A549 (cell line): ENCODE measurements at regions of chr19 and their contacts with region 1.

Region 1: GRCh38 chr19:55146078-55146704 is 2.8 kb downstream of the TNNT1 start:
- DNase-seq: peak; percentile 85 to 91
- ATAC-seq: peak; percentile 73 to 83
- H3K4me3 ChIP-seq: peak overlapping the region; percentile 64
- H3K27ac ChIP-seq: peak overlapping the region; percentile 82 to 92
- H3K4me1 ChIP-seq: peaks cover 37% of the 10 kb centered on the region
- CTCF ChIP-seq: peak; percentile 94
- EP300 ChIP-seq: no peak
- POLR2A ChIP-seq: no peak
- RAD21 ChIP-seq: peak; percentile 56 to 59

Region 2: DNA sequence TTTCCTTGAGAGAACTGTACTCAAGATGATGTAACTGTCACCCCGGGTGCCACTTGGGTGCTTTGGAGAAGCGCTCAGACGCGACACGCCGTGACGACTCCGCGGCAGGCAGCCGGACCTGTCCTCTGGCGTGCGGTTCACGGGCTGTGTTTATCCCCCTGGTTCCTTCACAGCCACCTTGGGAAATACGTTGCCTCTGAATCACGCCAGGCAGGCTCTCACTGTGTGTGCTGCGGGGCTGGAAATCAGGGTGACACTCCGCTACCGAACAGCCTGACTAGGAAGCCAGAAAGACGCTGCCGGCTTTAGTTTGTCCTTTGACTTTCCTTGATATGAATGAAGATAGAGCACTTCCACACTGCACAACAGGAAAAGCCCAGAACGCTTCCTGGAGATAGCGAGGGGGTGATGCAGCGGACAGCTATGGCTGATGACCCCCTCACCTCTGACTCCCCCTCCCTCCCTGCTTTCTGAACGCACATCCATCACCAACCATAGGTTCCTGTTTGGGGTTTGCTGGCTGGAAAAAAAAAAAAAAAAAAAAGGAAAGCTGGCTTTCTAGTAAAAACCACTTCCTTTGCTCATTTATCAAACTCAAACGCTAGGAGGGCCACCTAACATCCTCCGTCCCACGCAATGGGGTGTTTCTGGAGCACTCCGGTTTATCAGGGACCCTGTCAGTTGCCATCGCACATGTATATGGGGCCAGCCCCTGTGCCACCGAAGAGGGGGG is 104.4 kb before region 1 on chr19:
- CTCF ChIA-PET with region 1: no interaction called
- POLR2A ChIA-PET with region 1: no interaction called
- DNase-seq: no peak
- ATAC-seq: no peak
- H3K4me3 ChIP-seq: no peak overlapping the region
- H3K27ac ChIP-seq: no peak overlapping the region
- H3K4me1 ChIP-seq: no peaks in the 10 kb centered on the region
- CTCF ChIP-seq: no peak
- EP300 ChIP-seq: no peak
- POLR2A ChIP-seq: no peak
- RAD21 ChIP-seq: no peak

Region 3: DNA sequence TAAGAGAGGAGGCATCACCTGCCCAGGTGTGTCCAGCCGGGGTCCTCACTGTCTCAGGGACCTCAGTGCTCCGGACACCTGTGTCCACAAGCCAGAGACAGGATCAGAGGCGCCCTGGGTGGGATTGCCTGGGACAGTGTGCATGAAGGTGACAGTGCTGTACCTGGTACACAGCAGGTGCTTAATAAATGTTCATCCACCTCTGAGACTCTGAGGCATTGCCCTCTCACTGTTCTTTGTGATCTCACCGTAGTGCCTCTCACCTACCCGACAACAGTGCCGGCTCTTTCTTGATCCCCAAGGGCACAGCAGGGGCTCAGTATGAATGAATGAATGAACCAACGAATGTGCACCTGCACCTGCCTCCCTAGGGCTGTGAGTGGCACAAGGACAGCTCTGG is 92.5 kb before region 1 on chr19:
- CTCF ChIA-PET with region 1: no interaction called
- POLR2A ChIA-PET with region 1: no interaction called
- DNase-seq: no peak
- ATAC-seq: no peak
- H3K4me3 ChIP-seq: no peak overlapping the region
- H3K27ac ChIP-seq: no peak overlapping the region
- H3K4me1 ChIP-seq: no peaks in the 10 kb centered on the region
- CTCF ChIP-seq: no peak
- EP300 ChIP-seq: no peak
- POLR2A ChIP-seq: no peak
- RAD21 ChIP-seq: no peak

Region 4: DNA sequence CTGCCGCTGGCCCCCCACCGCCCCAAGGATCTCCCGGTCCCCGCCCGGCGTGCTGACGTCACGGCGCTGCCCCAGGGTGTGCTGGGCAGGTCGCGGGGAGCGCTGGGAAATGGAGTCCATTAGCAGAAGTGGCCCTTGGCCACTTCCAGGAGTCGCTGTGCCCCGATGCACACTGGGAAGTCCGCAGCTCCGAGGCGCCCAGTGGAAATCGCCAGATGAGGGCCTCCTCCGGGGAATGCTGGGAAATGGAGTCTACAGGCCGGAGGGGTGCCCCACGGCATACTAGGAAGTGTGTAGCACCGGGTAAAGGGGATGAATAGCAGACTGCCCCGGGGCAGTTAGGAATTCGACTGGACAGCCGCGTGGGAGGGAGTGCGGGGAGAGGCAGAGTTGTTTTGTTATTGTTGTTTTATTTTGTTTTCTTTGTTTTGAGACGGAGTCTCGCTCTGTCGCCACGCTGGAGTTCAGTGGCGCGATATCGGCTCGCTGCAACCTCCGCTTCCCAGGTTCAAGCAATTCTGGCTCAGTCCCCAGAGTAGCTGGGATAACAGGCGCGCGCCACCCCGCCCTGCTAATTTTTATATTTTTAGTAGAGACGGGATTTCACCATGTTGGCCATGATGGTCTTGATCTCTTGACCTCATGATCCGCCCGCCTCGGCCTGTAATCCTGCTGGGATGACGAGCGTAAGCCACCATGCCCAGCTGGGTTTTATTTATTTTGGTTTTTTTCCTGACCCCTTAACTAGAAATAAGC is 28.4 kb before region 1 on chr19 and contains the start of gene PPP1R12C:
- CTCF ChIA-PET with region 1: interaction called, 35 read pairs
- POLR2A ChIA-PET with region 1: interaction called, 12 read pairs
- DNase-seq: peak; percentile 99 to 100
- ATAC-seq: peak; percentile 90 to 95
- H3K4me3 ChIP-seq: peak within 1 kb of the TSS; percentile 64
- H3K27ac ChIP-seq: peak within 1 kb of the TSS; percentile 85 to 94
- H3K4me1 ChIP-seq: peaks cover 30% of the 10 kb centered on the region
- CTCF ChIP-seq: no peak
- EP300 ChIP-seq: no peak
- POLR2A ChIP-seq: peak; percentile 74
- RAD21 ChIP-seq: no peak
- polyA plus RNA-seq, gene PPP1R12C: 18.0 and 22.0 TPM in 2 replicates

Region 5: GRCh38 chr19:55178781-55179599 is 32.8 kb after region 1 on chr19:
- CTCF ChIA-PET with region 1: interaction called, 15 read pairs
- POLR2A ChIA-PET with region 1: no interaction called
- DNase-seq: peak; percentile 91
- ATAC-seq: peak; percentile 74 to 80
- H3K4me3 ChIP-seq: peak overlapping the region; percentile 26
- H3K27ac ChIP-seq: no peak overlapping the region; a peak in 1 of 6 replicates
- H3K4me1 ChIP-seq: peaks cover 17% of the 10 kb centered on the region
- CTCF ChIP-seq: no peak
- EP300 ChIP-seq: no peak
- POLR2A ChIP-seq: no peak
- RAD21 ChIP-seq: no peak

Region 6: DNA sequence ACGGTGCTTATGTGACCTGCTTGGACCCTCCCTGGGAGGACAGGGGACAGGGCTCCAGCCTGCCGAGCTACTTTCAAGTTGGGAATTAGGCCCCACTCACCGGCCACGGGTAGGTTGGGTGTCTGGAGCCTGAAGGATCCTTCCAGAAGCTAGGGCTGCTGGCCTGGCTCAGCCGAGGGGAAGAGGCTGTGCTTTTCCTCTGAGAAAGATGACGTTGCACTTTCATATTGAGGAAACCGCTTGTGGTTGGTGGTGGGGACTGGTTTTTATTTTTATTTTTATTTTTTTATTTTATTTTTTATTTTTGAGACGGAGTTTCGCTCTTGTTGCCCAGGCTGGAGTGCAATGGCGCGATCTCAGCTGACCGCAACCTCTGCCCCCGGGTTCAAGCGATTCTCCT is 179.0 kb after region 1 on chr19 and contains the start of gene TMEM150B:
- CTCF ChIA-PET with region 1: interaction called, 10 read pairs
- POLR2A ChIA-PET with region 1: no interaction called
- DNase-seq: no peak
- ATAC-seq: no peak
- H3K4me3 ChIP-seq: no peak within 1 kb of the TSS
- H3K27ac ChIP-seq: peak within 1 kb of the TSS in 1 of 2 experiments; percentile 65; a peak in 3 of 6 replicates
- H3K4me1 ChIP-seq: peaks cover 33% of the 10 kb centered on the region
- CTCF ChIP-seq: no peak
- EP300 ChIP-seq: no peak
- POLR2A ChIP-seq: no peak
- RAD21 ChIP-seq: no peak
- polyA plus RNA-seq, gene TMEM150B: 0.39 and 0.52 TPM in 2 replicates

Region 7: DNA sequence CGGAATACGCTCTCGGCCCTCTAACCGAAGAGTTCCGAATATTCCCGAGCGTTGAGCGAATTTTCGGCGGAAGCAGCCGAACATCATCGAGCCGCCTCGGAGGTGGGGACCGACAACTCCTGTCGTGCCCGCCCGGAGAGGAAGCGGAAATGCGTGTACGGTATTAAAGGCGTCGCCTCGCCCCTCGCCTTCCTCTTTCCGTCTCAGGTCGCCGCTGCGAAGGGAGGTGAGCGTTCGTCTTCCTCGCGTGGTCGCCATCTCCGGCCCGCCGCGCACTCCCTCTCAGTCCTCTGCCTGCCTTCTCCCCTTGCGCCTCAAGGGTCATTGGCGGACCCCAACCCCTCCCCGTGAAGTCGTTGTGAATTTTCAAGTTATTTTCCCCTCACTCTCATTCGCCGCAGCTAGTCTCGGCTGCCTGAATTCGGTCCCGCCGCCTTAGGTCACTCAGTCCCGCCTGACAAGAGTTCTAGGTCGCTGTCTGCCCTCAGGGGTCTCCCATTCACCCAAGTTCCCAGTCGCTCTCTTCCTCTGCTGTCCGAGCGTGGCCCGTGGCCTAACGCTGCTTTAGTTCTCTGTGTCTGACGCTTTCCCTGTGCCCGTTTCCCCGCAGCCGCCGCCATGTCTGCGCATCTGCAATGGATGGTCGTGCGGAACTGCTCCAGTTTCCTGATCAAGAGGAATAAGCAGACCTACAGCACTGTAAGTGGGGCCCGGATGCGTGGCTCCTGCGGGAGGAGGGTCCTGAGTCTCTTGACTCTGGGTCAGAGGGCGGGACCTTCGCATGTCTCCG is 239.7 kb after region 1 on chr19 and contains the start of gene RPL28:
- CTCF ChIA-PET with region 1: interaction called, 28 read pairs
- POLR2A ChIA-PET with region 1: interaction called, 3 read pairs
- DNase-seq: peak; percentile 92 to 99
- ATAC-seq: peak; percentile 54 to 77
- H3K4me3 ChIP-seq: peak within 1 kb of the TSS; percentile 89
- H3K27ac ChIP-seq: peak within 1 kb of the TSS; percentile 91 to 99
- H3K4me1 ChIP-seq: peaks cover 50% of the 10 kb centered on the region
- CTCF ChIP-seq: no peak
- EP300 ChIP-seq: no peak
- POLR2A ChIP-seq: peak; percentile 100
- RAD21 ChIP-seq: no peak
- polyA plus RNA-seq, gene RPL28: 329 and 351 TPM in 2 replicates

Region 8: GRCh38 chr19:55461259-55461973 is 315.2 kb after region 1 on chr19 and contains the start of gene ISOC2:
- CTCF ChIA-PET with region 1: interaction called, 27 read pairs
- POLR2A ChIA-PET with region 1: no interaction called
- DNase-seq: peak; percentile 100
- ATAC-seq: peak; percentile 93 to 98
- H3K4me3 ChIP-seq: peak within 1 kb of the TSS; percentile 85
- H3K27ac ChIP-seq: peak within 1 kb of the TSS; percentile 83 to 90
- H3K4me1 ChIP-seq: peaks cover 14% of the 10 kb centered on the region; the same call in 2 of the 3 replicates
- CTCF ChIP-seq: no peak
- EP300 ChIP-seq: no peak
- POLR2A ChIP-seq: peak; percentile 77
- RAD21 ChIP-seq: no peak
- polyA plus RNA-seq, gene ISOC2: 45.3 and 51.5 TPM in 2 replicates

Region 9: GRCh38 chr19:55516878-55517620 is 370.9 kb after region 1 on chr19:
- CTCF ChIA-PET with region 1: interaction called, 18 read pairs
- POLR2A ChIA-PET with region 1: no interaction called
- DNase-seq: peak; percentile 97 to 100
- ATAC-seq: peak; percentile 90 to 95
- H3K4me3 ChIP-seq: peak overlapping the region; percentile 35
- H3K27ac ChIP-seq: peak overlapping the region; percentile 78 to 88
- H3K4me1 ChIP-seq: peaks cover 21% of the 10 kb centered on the region
- CTCF ChIP-seq: peak; percentile 97
- EP300 ChIP-seq: no peak
- POLR2A ChIP-seq: peak; percentile 27; the same call in 1 of the 2 replicates
- RAD21 ChIP-seq: peak; percentile 100